A549 (cell line): ENCODE measurements at regions of chr3 and their contacts with region 1.

Region 1: DNA sequence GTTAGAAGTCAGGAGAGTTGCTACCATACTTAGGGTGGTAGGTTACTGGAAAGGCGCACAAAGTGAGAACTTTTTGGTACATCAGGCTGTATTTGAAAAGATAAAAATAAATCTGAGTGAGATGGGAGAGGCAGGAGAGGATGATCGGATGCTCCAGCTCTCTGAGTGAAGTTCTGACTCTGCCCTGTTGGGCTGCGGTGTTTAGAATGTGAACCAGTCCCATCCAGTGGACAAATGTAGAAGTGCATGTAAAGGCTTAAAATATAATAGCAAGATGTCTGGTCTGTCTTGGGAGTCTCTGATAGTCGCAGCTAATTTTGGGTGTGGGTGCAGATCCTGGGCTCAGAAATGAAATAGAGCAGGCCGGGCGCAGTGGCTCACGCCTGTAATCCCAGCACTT is 30.4 kb downstream of the ACKR2 start:
- DNase-seq: peak; percentile 62 to 70
- ATAC-seq: peak; percentile 99
- H3K4me3 ChIP-seq: peak overlapping the region; percentile 39
- H3K27ac ChIP-seq: peak overlapping the region; percentile 47 to 75; a peak in 4 of 6 replicates
- H3K4me1 ChIP-seq: no peaks in the 10 kb centered on the region
- CTCF ChIP-seq: peak; percentile 49
- EP300 ChIP-seq: no peak
- POLR2A ChIP-seq: no peak
- RAD21 ChIP-seq: peak; percentile 47 to 53; a peak in 4 of 5 replicates

Region 2: DNA sequence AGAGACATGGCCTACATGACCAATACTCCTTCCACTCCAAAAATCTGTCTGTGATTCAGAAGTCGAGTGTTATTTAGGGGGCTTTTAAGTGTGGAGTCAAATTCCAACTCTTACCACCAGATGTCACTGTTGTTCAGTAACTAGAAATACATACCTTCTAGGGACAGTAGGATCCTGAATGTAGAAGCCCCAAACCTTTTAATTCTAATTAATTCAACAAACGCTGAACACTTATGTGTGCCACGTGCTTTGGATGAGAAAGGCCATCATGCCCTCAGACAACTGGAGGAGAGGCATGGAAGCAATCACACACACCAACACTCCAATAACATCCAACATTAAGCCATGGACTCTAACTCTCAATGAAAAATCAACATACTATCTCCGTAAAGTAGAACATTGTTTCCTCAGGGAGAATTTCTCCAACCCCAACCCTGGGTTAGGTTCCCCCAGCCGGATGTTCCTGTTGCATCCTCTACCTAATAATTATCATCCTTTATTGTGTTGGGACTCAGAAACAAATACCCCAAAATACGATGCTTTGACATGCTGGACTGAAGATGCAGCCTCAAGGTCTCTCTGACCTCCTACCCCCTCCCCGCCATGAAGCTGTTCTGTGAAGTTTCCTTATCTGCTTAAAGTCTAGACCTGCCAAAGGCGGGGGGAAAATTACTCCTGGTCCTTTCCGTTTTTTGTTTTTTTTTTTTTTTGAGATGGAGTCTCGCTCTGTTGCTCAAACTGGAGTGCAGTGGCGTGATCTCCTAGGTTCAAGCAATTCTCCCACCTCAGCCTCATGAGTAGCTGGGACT is 58.5 kb before region 1 on chr3:
- CTCF ChIA-PET with region 1: interaction called, 25 read pairs
- POLR2A ChIA-PET with region 1: no interaction called
- DNase-seq: peak; percentile 64 to 67
- ATAC-seq: peak; percentile 78 to 91; a peak in 5 of 6 replicates
- H3K4me3 ChIP-seq: no peak overlapping the region
- H3K27ac ChIP-seq: no peak overlapping the region
- H3K4me1 ChIP-seq: no peaks in the 10 kb centered on the region
- CTCF ChIP-seq: peak; percentile 65
- EP300 ChIP-seq: no peak
- POLR2A ChIP-seq: no peak
- RAD21 ChIP-seq: peak; percentile 53 to 56

Region 3: DNA sequence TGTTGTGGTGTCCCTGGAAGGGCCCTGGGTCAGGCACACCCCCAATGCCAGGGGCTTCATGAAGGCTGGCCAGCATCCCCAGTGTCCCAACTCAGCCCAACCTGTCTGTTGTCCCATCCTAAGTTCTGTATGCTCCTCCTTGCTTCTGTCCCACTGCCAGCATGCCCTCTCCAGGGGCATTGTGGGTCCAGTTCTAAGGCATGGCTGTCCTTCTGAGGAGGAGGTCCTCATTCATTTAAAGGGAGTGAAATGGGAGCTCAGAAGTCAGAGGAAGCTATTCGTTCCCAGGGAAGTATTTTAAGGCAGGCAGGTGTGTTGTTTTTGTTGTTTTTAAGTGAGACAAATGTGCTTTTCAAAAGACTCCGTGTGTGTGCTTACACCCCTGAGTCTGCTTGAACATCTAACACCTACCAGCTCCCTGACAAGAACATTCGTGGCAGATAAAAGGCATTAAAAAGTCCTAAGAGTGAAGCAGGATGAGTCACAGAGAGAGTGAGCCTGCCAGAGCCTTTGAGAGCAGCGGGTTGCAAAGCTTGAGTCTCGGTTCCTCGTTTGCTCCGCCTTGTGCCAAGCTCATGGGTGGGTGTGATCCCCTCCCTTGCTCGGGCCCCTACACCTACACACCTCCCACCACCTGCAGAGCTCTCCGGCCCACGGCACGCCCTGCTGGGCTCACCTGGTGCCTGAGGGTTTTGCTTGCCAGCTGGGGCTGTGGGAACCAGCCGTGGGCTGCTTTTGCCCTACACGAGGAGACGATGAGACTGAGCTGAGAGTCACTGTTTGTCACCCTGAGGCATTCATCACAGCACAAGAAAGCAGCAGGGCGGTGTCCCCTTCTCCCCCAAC is 1218.6 kb after region 1 on chr3:
- CTCF ChIA-PET with region 1: no interaction called
- POLR2A ChIA-PET with region 1: interaction called, 18 read pairs
- DNase-seq: no peak
- ATAC-seq: peak; percentile 40 to 53; a peak in 3 of 6 replicates
- H3K4me3 ChIP-seq: no peak overlapping the region
- H3K27ac ChIP-seq: peak overlapping the region in 1 of 2 experiments; percentile 60; a peak in 3 of 6 replicates
- H3K4me1 ChIP-seq: peaks cover 30% of the 10 kb centered on the region
- CTCF ChIP-seq: no peak
- EP300 ChIP-seq: no peak
- POLR2A ChIP-seq: no peak
- RAD21 ChIP-seq: no peak